ENCODE measurements at regions of chr3 and their contacts with region 1.

Region 1: GRCh38 chr3:45210308-45211041 is 15.6 kb downstream of the TMEM158 start:
- DNase-seq: peak; percentile 89
- H3K4me3 Mint-ChIP-seq: no peak overlapping the region
- H3K27ac Mint-ChIP-seq: peak overlapping the region; percentile 24
- H3K4me1 Mint-ChIP-seq: peaks cover 24% of the 10 kb centered on the region
- H3K27me3 Mint-ChIP-seq: peaks cover 77% of the 10 kb centered on the region

Region 2: DNA sequence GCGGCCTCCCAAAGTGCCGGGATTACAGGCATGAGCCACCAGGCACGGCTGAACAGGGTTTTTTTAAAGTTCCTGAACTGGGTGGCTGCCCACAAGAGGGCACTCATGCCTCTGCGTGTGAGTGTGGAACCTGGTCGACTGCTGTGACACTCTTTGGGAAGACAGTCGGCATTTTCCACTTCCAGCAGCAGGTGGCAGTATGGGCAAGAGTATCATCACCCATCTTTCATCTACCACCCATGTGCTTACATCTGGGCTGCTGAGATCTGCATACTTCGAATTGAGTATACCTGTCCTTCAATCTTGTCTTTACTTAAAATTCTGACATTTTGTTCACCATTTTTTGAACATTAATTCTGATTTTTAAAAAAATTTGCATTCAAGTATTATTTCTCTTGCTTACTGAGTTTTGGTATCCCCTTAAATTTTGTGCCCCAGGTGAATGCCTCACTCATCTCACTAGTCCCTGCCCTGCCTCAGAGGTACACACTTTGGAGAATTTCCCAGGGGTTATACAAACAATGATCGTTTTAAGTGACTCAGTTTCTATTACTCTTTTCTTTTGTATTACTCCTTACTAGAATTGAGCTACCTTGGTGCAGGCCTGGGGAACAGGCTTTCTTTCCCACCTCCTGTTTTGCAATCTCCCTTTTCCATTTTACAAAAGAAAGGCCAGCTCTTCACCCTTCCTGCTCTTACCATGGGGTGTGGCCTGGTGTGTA is 172.6 kb before region 1 on chr3:
- CTCF ChIA-PET with region 1: interaction called, 390 read pairs
- DNase-seq: peak; percentile 96
- H3K4me3 Mint-ChIP-seq: no peak overlapping the region
- H3K27ac Mint-ChIP-seq: no peak overlapping the region
- H3K4me1 Mint-ChIP-seq: peaks cover 59% of the 10 kb centered on the region
- H3K27me3 Mint-ChIP-seq: peaks cover 71% of the 10 kb centered on the region

Region 3: GRCh38 chr3:45055411-45056143 is 154.9 kb before region 1 on chr3:
- CTCF ChIA-PET with region 1: interaction called, 390 read pairs
- DNase-seq: peak; percentile 43
- H3K4me3 Mint-ChIP-seq: no peak overlapping the region
- H3K27ac Mint-ChIP-seq: no peak overlapping the region
- H3K4me1 Mint-ChIP-seq: peaks cover 27% of the 10 kb centered on the region
- H3K27me3 Mint-ChIP-seq: peaks cover 67% of the 10 kb centered on the region

Region 4: GRCh38 chr3:45078910-45079522 is 131.5 kb before region 1 on chr3:
- CTCF ChIA-PET with region 1: interaction called, 11 read pairs
- DNase-seq: peak; percentile 45
- H3K4me3 Mint-ChIP-seq: no peak overlapping the region
- H3K27ac Mint-ChIP-seq: no peak overlapping the region
- H3K4me1 Mint-ChIP-seq: peaks cover 4% of the 10 kb centered on the region
- H3K27me3 Mint-ChIP-seq: peaks cover 74% of the 10 kb centered on the region

Region 5: DNA sequence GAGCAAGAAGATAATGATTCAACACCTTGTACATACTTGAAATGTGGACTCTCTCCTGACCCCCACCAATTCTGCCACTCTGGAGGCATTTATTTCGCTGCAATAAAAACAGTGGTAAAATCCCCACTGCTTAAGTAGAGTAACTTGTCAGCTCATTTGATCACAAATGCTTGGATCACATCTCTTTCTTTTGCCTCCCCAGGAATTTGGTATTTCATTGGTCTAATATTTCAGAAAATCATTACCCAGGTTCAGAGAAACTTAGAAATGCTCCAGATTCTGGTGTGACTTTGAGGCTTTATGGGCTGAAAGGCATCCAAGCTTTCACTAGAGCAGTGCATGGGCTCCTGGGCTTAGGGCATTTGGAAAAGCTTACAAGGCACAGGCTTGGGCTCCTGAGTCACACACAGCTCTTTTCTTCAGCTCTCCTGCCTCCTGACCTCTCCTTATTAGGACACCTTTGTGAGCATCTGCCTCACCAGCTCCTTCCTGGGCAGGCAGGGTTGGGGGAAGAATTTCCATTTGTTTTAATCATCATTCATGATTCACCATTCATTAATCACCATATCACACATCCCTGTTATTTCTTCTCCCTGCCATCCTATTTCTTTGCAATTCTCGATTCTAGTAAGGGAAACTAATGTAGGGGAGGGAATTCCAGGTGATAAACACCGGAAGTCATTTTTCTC is 86.8 kb before region 1 on chr3:
- CTCF ChIA-PET with region 1: no interaction called
- DNase-seq: no peak
- H3K4me3 Mint-ChIP-seq: no peak overlapping the region
- H3K27ac Mint-ChIP-seq: no peak overlapping the region
- H3K4me1 Mint-ChIP-seq: peaks cover 42% of the 10 kb centered on the region
- H3K27me3 Mint-ChIP-seq: peaks cover 66% of the 10 kb centered on the region

Region 6: DNA sequence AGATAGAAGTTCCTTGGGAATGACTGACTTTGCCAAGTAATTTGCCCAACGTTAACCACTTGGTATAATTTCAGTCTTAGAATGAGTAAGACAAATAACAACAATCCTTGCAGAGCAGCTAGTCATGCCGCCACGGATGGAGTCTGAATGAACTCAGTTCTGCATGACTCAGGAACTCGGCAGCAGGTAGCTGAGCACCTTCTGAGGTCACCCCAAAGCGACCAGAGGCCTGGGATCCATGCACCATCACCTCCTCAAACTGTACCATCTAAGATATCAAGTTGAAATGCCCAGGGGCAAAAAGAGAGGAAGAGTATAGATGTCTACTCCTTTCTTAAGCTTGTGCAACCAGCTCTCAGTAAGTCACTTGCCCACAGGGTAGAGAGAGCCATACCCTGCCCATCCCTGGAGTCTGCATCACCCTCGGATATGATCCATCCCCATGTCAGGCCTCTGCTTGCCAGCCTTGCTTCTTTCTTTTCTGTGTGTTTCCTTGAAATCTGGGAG is 55.8 kb before region 1 on chr3:
- CTCF ChIA-PET with region 1: interaction called, 10 read pairs
- DNase-seq: no peak
- H3K4me3 Mint-ChIP-seq: no peak overlapping the region
- H3K27ac Mint-ChIP-seq: no peak overlapping the region
- H3K4me1 Mint-ChIP-seq: no peaks in the 10 kb centered on the region
- H3K27me3 Mint-ChIP-seq: peaks cover 59% of the 10 kb centered on the region

Region 7: DNA sequence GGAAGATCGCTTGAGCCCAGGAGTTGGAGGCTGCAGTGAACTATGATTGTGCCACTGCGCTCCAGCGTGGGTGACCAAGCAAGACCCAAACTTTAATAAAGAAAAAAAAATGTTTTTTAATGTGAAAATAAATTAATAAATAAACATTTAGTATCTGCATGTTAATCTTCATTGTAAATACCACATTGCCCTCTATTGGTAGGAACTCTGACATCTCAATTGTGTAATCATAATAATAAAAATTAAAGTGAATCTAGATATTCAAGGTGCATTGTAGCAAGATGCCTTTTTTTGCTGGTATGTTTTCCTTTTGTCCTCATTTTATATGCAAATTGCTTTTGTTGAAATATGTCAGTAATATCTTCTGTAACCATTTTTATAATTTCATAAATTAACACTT is 289.1 kb after region 1 on chr3:
- CTCF ChIA-PET with region 1: interaction called, 12 read pairs
- DNase-seq: no peak
- H3K4me3 Mint-ChIP-seq: no peak overlapping the region
- H3K27ac Mint-ChIP-seq: no peak overlapping the region
- H3K4me1 Mint-ChIP-seq: peaks cover 21% of the 10 kb centered on the region
- H3K27me3 Mint-ChIP-seq: no peaks in the 10 kb centered on the region

Measured in activated naive CD4-positive, alpha-beta T cell treated with anti-CD3 and anti-CD28 coated beads, Interleukin-2, amount 10 ng/mL, durations not matched to agents 7 days and 5 days (primary cell).